ENCODE measurements at regions of chr11 and their contacts with region 1.

Region 1: DNA sequence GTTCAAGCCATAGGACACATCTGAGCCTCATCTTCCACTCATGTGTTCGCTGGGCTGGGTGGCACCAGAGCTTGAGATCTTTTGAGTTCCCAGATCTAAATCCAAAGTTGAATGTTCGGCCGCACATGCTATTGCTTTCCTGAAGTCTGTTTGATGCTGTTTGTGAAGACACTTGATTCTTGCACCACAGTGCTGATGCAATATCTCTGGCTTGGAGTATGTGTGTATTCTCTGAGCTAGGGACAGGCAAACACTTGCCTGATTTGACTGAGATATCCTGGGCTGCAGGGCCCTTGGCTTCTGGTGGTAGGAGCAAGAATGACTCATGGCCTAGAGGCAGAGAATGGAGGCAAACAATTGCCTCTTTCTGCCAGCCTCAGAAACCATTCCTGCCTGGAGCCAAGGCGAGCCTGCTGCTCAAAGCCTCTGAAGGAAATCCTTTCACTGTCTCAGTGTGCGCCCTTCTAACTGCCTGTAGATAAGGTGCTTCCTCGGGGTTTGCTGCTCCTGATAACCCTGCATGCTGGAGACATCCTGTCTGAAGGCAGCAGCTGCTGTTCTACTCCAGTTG is 73.0 kb downstream of the CYB5R2 start:
- DNase-seq: peak; percentile 78
- ATAC-seq: peak; percentile 90
- H3K4me3 ChIP-seq: no peak overlapping the region
- H3K27ac ChIP-seq: peak overlapping the region; percentile 55; the same call in 1 of the 2 replicates
- H3K4me1 ChIP-seq: peaks cover 6% of the 10 kb centered on the region
- H3K27me3 ChIP-seq: no peaks in the 10 kb centered on the region
- CTCF ChIP-seq: no peak
- POLR2A ChIP-seq: no peak
- RAD21 ChIP-seq: no peak

Region 2: GRCh38 chr11:7589861-7590260 is 10.4 kb before region 1 on chr11:
- CTCF ChIA-PET with region 1: interaction called, 10 read pairs
- POLR2A ChIA-PET with region 1: no interaction called
- dilution Hi-C with region 1: no loop called
- in situ Hi-C with region 1: no loop called
- intact Hi-C with region 1: no loop called
- DNase-seq: no peak
- ATAC-seq: no peak
- H3K4me3 ChIP-seq: no peak overlapping the region
- H3K27ac ChIP-seq: no peak overlapping the region
- H3K4me1 ChIP-seq: peaks cover 8% of the 10 kb centered on the region; the same call in 1 of the 2 replicates
- H3K27me3 ChIP-seq: no peaks in the 10 kb centered on the region
- CTCF ChIP-seq: no peak
- POLR2A ChIP-seq: no peak
- RAD21 ChIP-seq: no peak

Region 3: GRCh38 chr11:7651140-7651551 is 50.9 kb after region 1 on chr11:
- CTCF ChIA-PET with region 1: no interaction called
- POLR2A ChIA-PET with region 1: no interaction called
- dilution Hi-C with region 1: no loop called
- in situ Hi-C with region 1: no loop called
- intact Hi-C with region 1: loop called (anchors 5 kb)
- DNase-seq: peak; percentile 13
- ATAC-seq: no peak
- H3K4me3 ChIP-seq: no peak overlapping the region
- H3K27ac ChIP-seq: no peak overlapping the region
- H3K4me1 ChIP-seq: no peaks in the 10 kb centered on the region
- H3K27me3 ChIP-seq: no peaks in the 10 kb centered on the region
- CTCF ChIP-seq: no peak
- POLR2A ChIP-seq: no peak
- RAD21 ChIP-seq: no peak

Measured in IMR-90 (cell line).